Activated naive CD4-positive, alpha-beta T cell treated with anti-CD3 and anti-CD28 coated beads for 36 hours (primary cell): ENCODE measurements at regions of chr2 and their contacts with region 1.

Region 1: GRCh38 chr2:162890690-162891311 is 52.2 kb upstream of the KCNH7 start:
- DNase-seq: peak; percentile 15
- H3K4me3 Mint-ChIP-seq: no peak overlapping the region
- H3K27ac Mint-ChIP-seq: no peak overlapping the region
- H3K4me1 Mint-ChIP-seq: no peaks in the 10 kb centered on the region
- H3K27me3 Mint-ChIP-seq: no peaks in the 10 kb centered on the region

Region 2: GRCh38 chr2:162782138-162782537 is 108.7 kb before region 1 on chr2:
- CTCF ChIA-PET with region 1: no interaction called
- intact Hi-C with region 1: no loop called
- DNase-seq: no peak
- H3K4me3 Mint-ChIP-seq: no peak overlapping the region
- H3K27ac Mint-ChIP-seq: no peak overlapping the region
- H3K4me1 Mint-ChIP-seq: no peaks in the 10 kb centered on the region
- H3K27me3 Mint-ChIP-seq: no peaks in the 10 kb centered on the region

Region 3: DNA sequence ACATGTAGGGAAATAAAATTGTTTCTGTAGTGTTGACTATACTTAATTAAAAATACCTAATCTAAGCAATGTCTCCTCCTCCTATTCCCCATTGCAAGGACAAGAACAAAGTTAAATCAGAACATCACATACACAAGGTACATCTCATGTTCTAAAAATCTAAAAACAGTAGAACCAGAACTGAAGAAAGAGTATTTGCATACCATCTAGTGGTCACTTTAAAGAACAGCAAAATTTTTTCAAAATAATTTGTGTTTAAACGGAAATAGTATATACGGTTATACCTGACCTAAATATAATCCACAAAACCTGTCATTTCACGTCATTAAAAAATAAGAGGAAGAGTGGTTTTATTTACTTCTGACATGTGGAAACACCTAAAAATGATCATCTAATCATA is 242.0 kb after region 1 on chr2:
- CTCF ChIA-PET with region 1: no interaction called
- intact Hi-C with region 1: loop called (anchors 2 kb)
- DNase-seq: no peak
- H3K4me3 Mint-ChIP-seq: no peak overlapping the region
- H3K27ac Mint-ChIP-seq: no peak overlapping the region
- H3K4me1 Mint-ChIP-seq: no peaks in the 10 kb centered on the region
- H3K27me3 Mint-ChIP-seq: no peaks in the 10 kb centered on the region

Region 4: DNA sequence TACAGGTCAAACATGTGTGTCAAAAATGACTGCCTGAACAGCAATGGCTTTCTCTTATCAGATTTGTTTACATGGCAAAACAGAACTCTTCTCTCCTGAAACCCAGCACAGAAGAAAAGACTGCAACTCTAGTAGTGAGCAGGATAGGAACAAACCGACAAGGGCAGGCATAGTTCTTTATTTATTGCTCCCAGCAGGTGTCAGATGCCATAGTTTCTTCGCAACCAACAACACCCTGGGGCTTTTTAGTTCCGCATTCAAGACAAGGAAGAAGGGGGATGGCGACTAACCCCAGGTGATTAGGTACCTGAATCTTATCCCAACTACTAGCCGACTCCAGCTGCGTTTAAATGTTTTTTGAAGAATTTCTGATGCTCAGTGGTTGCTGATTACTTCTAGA is 1212.5 kb after region 1 on chr2:
- CTCF ChIA-PET with region 1: interaction called, 12 read pairs
- intact Hi-C with region 1: no loop called
- DNase-seq: no peak
- H3K4me3 Mint-ChIP-seq: no peak overlapping the region
- H3K27ac Mint-ChIP-seq: no peak overlapping the region
- H3K4me1 Mint-ChIP-seq: no peaks in the 10 kb centered on the region
- H3K27me3 Mint-ChIP-seq: no peaks in the 10 kb centered on the region